ENCODE measurements at regions of chr6 and their contacts with region 1.

Region 1: DNA sequence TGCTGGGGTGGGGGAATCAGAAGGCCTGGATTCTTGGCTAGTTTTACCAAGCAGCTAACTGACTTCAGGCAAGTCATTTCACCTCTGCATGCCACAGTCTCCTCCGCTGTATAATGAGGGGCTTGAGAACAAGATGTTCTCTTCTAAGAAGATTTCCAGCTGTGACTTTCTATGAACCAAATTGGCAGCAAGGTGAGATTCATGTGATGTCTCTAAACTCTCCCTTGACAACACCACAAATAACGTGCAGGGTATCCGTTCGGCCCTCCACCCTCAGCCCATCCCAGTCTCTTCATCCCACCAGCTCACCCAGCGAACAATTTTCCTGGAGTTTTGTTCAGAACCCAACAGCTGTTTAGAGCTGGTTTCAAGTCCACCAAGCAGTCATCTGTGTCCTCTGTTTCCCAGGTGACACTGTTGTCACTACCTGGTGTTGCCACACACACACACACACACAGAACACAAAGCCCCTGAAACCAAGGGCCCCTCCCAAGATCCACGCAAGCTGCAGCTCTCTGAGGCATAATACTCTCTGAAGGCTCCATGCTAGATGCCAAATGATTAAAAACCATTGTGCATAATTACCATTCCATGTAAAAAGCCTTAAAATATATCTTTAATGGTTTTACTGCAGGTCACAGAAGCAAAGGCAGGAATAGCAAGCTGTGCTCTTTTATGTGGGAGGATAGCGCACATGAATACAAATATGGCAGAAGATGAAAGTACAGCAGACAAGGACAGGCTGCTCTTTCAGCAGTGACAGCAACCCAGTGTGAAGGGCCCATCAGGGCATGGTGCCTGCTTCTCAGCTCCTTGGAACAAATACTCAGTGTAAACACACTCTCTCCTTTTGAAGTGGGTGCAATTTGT is 48.2 kb downstream of the ARHGAP18 start:
- DNase-seq: no peak
- H3K4me3 ChIP-seq: no peak overlapping the region
- H3K4me3 Mint-ChIP-seq: no peak overlapping the region
- H3K27ac ChIP-seq: no peak overlapping the region
- H3K27ac Mint-ChIP-seq: no peak overlapping the region
- H3K4me1 ChIP-seq: peaks cover 0 to 5% of the 10 kb centered on the region in 2 donors
- H3K4me1 Mint-ChIP-seq: peaks cover 9% of the 10 kb centered on the region
- H3K27me3 ChIP-seq: no peaks in the 10 kb centered on the region
- H3K27me3 Mint-ChIP-seq: peaks cover 0 to 3% (median 0%) of the 10 kb centered on the region in 3 donors
- CTCF ChIP-seq: no peak

Region 2: GRCh38 chr6:129609635-129610034 is 52.1 kb before region 1 on chr6:
- intact Hi-C with region 1: loop called in 1 of 2 experiments (anchors 10 kb)
- DNase-seq: no peak
- H3K4me3 ChIP-seq: no peak overlapping the region
- H3K4me3 Mint-ChIP-seq: no peak overlapping the region
- H3K27ac ChIP-seq: no peak overlapping the region
- H3K27ac Mint-ChIP-seq: no peak overlapping the region
- H3K4me1 ChIP-seq: no peaks in the 10 kb centered on the region
- H3K4me1 Mint-ChIP-seq: peaks cover 4% of the 10 kb centered on the region
- H3K27me3 ChIP-seq: no peaks in the 10 kb centered on the region
- H3K27me3 Mint-ChIP-seq: no peaks in the 10 kb centered on the region
- CTCF ChIP-seq: no peak

Region 3: DNA sequence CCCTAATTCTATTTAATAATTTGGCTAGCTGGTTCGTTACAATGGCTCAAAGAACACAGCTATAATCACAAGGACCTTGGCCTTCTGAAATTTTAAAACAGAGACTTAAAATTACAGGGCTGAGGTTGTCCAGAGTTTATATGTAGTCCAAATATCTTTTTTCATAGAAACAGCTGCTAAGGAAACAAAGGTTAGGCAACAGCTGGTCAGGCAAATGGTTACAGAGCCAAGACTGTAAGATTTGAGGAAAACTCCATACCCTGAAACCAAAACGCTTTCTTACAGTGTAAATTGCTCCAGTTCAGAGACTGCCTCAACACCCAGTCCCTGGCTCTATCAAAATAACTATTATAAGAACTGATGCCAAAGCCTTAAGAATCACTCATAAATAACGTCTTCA is 57.9 kb after region 1 on chr6:
- intact Hi-C with region 1: loop called in 1 of 2 experiments (anchors 10 kb)
- DNase-seq: no peak
- H3K4me3 ChIP-seq: no peak overlapping the region
- H3K4me3 Mint-ChIP-seq: no peak overlapping the region
- H3K27ac ChIP-seq: no peak overlapping the region
- H3K27ac Mint-ChIP-seq: no peak overlapping the region
- H3K4me1 ChIP-seq: no peaks in the 10 kb centered on the region
- H3K4me1 Mint-ChIP-seq: no peaks in the 10 kb centered on the region
- H3K27me3 ChIP-seq: no peaks in the 10 kb centered on the region
- H3K27me3 Mint-ChIP-seq: no peaks in the 10 kb centered on the region
- CTCF ChIP-seq: no peak

Region 4: DNA sequence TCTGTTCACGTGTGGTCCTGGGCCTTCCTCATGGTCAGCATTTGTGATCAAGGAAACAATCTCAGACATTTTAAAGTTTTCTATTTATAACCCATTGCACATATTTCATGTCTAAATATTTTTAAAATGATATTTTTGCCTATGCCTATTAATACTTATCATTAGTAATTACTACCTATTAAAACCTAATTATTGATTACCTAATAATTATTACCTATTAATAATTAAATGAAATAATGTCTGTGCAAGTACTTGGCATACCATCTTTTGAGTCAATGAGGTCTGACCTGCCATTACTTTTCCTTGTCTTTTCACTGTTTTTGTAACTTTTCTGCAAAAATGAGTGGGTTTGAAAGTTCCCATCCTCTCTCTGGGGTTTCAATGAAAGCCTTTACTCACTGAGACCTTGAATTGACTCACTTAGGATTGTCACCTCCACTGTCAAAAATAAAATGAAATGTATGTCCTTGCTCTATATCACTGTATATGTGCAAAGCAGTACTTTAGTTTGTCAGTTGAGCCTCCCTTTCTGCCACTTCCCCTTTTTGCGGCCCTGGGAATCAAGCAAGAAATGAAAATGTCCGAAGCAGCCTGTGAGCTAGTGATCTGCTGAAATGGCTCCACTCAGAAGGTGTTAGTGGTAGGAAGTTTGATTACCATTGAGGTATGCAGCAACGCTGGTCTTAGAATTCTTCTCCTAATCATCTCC is 444.4 kb after region 1 on chr6:
- intact Hi-C with region 1: no loop called
- DNase-seq: peak; percentile 1 to 7 (median 2)
- H3K4me3 ChIP-seq: no peak overlapping the region
- H3K4me3 Mint-ChIP-seq: no peak overlapping the region
- H3K27ac ChIP-seq: no peak overlapping the region
- H3K27ac Mint-ChIP-seq: peak overlapping the region in 2 of 7 donors; percentile 19 to 55
- H3K4me1 ChIP-seq: no peaks in the 10 kb centered on the region
- H3K4me1 Mint-ChIP-seq: peaks cover 5% of the 10 kb centered on the region
- H3K27me3 ChIP-seq: no peaks in the 10 kb centered on the region
- H3K27me3 Mint-ChIP-seq: no peaks in the 10 kb centered on the region
- CTCF ChIP-seq: no peak

Region 5: DNA sequence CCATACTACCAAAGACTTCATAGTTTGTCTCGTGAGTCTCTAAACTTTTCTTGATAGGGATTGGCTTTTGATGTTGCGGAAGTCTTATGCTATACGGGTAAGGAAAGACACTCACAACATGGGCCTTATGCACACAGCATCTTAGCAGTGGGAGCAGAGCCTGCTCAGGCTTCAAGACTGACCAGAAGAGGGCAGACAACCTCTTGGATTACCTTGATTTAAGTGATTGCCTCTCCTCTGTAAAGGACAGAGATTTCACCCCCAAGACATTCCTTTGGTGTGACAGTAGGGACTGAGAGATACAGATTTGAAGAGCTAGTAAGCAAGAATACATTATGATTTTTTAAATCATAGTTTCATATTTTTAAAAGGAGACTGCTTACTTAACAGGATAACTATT is 632.0 kb after region 1 on chr6:
- intact Hi-C with region 1: no loop called
- DNase-seq: peak in 1 of 3 donors; percentile 3
- H3K4me3 ChIP-seq: no peak overlapping the region
- H3K4me3 Mint-ChIP-seq: no peak overlapping the region
- H3K27ac ChIP-seq: no peak overlapping the region
- H3K27ac Mint-ChIP-seq: no peak overlapping the region
- H3K4me1 ChIP-seq: no peaks in the 10 kb centered on the region
- H3K4me1 Mint-ChIP-seq: no peaks in the 10 kb centered on the region
- H3K27me3 ChIP-seq: no peaks in the 10 kb centered on the region
- H3K27me3 Mint-ChIP-seq: peaks cover 0 to 2% (median 1%) of the 10 kb centered on the region in 3 donors
- CTCF ChIP-seq: peak; percentile 17

Measured in CD14-positive monocyte (primary cell).